PC-9 (cell line): ENCODE measurements at regions of chr2 and their contacts with region 1.

Region 1: GRCh38 chr2:209208211-209208610 is 215.6 kb upstream of the MAP2 start:
- DNase-seq: peak in 1 of 2 experiments; percentile 12
- H3K4me3 ChIP-seq: peak overlapping the region; percentile 31; the same call in 1 of the 2 replicates
- H3K27ac ChIP-seq: no peak overlapping the region
- H3K4me1 ChIP-seq: no peaks in the 10 kb centered on the region
- H3K27me3 ChIP-seq: no peaks in the 10 kb centered on the region
- CTCF ChIP-seq: peak; percentile 76

Region 2: DNA sequence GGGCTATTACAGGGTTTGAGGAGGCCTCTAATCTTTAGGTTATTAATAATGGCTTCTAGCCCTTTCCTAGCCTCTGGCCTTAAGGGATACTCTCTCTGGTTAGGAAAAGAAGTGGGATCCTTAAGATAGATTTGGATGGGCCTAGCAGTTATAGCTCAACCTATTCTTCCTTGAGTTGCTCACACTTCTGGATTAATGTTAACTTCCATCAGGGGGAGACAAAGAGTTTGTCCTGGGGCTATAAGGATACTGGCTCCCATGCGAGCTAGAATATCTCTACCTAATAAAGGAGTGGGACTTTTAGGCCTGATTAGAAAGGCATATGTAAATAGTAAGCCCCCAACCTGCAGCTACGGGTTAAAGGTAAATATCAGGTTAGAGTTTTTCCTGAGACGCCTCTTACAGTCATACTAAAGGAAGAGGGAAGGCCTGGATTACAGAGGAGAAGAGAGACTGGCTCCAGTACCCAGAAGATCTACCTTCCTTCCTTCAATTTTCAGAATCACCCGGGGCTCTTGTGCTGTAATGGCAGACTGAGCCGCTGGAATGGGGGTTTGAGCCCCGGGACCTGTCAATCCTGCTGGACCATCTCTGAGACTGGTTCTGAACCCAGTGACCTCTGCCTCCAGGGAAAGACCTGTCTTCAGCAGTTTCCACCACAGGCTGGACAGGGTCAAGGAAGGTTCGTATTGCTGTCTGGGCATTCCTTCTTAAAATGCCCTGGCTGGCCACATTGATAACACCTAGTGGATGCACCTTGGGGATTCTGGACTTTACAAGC is 815.7 kb before region 1 on chr2:
- CTCF ChIA-PET with region 1: no interaction called
- POLR2A ChIA-PET with region 1: no interaction called
- intact Hi-C with region 1: loop called (anchors 1 kb)
- DNase-seq: no peak
- H3K4me3 ChIP-seq: no peak overlapping the region
- H3K27ac ChIP-seq: no peak overlapping the region
- H3K4me1 ChIP-seq: no peaks in the 10 kb centered on the region
- H3K27me3 ChIP-seq: no peaks in the 10 kb centered on the region
- CTCF ChIP-seq: no peak

Region 3: DNA sequence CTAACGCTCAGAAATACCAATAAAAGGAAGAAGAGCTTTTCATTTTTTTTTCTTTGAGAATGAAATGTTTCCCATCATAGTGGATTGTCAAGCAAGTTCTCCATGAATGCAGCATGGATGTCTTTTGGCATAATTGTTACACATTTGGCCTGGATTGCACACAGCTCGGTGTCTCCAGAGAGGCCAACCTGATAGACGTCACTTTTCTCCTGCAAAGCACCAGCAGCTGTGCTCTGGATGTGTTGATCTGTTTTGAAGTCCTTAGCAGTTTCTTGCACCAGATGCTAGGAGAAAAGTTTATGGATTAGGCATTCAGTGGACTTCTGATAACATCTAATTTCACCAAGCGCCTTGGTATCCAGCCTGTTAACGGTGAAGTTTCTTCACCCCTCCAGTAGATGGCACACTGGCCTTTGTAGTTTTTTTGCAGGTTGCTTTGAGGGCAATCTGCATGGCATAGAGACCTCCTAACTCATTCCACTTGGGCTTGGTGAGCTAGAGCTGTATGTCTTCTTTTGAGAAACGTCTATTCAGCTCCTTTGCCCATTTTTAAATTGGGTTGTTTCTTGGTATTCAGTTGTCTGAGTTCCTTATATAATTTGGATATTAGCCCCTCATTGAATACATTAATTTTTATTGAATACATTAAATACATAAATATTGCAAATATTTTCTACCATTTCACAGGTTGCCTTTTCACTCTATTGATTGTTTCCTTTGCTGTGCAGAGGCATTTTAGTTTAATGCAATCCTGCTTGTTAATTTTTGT is 741.9 kb before region 1 on chr2:
- CTCF ChIA-PET with region 1: no interaction called
- POLR2A ChIA-PET with region 1: no interaction called
- intact Hi-C with region 1: loop called (anchors 5 kb)
- DNase-seq: peak in 1 of 2 experiments; percentile 23
- H3K4me3 ChIP-seq: no peak overlapping the region
- H3K27ac ChIP-seq: no peak overlapping the region
- H3K4me1 ChIP-seq: no peaks in the 10 kb centered on the region
- H3K27me3 ChIP-seq: no peaks in the 10 kb centered on the region
- CTCF ChIP-seq: peak; percentile 77

Region 4: DNA sequence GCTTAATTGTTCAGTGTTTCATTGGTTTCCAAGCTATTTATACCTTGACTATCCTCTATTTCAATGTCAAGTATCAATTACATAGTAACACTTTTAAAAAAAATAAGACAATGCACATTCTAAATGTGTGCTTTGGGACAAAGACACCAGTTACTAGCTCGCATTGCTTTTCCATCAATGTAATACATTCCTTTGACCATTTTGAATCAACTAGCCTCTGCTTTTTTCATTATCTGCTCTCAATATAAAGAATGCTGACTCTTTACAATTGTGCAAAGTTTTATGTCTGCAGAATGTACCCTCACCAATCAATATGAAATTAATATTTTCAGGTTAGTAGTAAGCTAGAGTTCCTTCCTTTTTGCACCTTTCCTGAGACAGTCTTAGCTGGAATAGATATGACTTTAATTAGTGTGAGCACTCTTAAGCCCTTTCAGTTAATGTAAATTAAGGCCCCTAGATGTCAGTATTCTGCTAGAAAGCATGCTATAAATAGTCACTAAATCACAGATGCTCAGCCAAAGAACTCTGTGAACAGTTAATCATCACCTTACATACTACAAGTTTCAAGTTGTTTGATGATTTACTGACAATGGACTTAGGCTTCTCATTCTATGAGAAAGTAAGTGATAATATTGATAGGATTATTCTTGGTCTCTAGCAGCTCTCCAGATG is 388.1 kb before region 1 on chr2:
- CTCF ChIA-PET with region 1: no interaction called
- POLR2A ChIA-PET with region 1: no interaction called
- intact Hi-C with region 1: loop called (anchors 1 kb)
- DNase-seq: no peak
- H3K4me3 ChIP-seq: no peak overlapping the region
- H3K27ac ChIP-seq: no peak overlapping the region
- H3K4me1 ChIP-seq: no peaks in the 10 kb centered on the region
- H3K27me3 ChIP-seq: no peaks in the 10 kb centered on the region
- CTCF ChIP-seq: peak; percentile 45; the same call in 1 of the 2 replicates

Region 5: DNA sequence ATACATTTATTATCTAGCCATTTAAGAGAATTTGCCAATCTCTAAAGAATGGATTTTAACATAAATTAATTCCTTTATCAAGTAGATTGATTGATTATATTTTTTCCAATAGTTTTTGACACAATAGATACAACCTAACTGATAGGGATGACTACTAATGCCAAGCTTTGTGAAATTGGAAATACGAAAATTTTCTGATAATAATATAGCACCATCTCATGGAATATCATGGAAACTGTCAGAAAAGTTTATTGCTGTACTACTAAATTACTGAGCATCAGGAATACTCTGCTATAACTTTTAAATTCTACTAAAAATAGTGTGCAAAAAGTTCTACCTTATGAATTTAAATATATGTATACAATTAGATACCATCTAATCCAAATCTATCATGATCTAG is 113.8 kb after region 1 on chr2:
- CTCF ChIA-PET with region 1: no interaction called
- POLR2A ChIA-PET with region 1: no interaction called
- intact Hi-C with region 1: loop called (anchors 10 kb)
- DNase-seq: no peak
- H3K4me3 ChIP-seq: no peak overlapping the region
- H3K27ac ChIP-seq: no peak overlapping the region
- H3K4me1 ChIP-seq: no peaks in the 10 kb centered on the region
- H3K27me3 ChIP-seq: no peaks in the 10 kb centered on the region
- CTCF ChIP-seq: peak; percentile 39; the same call in 1 of the 2 replicates